CD14-positive monocyte (primary cell): ENCODE measurements at regions of chr3 and their contacts with region 1.

Region 1: DNA sequence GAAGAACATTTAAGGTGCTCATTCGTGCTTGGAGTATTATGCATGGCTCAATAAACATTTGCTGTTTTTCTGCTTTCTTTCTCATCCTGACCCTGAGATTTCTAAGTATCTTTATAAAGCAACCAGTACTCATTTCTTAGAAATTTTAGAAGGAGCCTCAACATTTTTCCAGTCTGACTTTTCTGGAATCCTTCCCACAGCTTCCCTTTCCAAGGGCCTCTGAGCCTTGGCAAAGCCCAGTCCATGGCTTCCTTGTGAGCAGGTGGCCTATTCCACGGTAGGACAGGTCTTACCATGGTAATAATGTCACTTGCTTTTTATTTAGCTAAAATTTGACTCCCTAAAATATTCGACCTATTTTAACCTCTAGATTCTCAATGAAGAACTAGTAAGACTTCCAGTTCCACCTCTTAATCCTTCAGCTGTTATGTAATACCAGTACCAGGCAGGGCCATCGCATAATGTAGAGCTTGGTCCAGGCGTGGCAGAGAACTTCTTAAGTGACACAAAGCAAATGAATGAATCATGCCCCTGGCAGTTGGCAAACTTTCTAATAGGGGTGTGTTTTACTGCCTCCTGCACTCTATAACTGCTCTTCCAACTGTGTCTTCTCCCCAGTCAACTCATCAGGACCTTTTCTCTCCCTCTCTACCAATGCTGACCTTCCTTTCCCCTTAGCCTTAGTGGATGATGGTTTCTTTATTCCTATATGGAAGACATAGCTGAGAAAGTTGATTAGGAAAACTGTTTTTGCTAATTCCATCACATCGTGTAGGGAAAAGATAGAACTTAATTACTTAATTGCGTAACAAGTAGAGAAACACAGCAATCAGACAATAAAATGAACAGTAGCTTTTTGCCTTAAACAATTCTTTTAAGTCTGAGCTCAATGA is 894 bp upstream of the TM4SF4 start:
- DNase-seq: peak; percentile 87 to 90 (median 88)
- H3K4me3 ChIP-seq: peak overlapping the region in 1 of 3 experiments; percentile 30
- H3K4me3 Mint-ChIP-seq: peak overlapping the region in 1 of 2 donors; percentile 39
- H3K27ac ChIP-seq: peak overlapping the region; percentile 62 to 80
- H3K27ac Mint-ChIP-seq: peak overlapping the region; percentile 84 to 95 (median 93)
- H3K4me1 ChIP-seq: peaks cover 62 to 67% of the 10 kb centered on the region in 2 donors
- H3K4me1 Mint-ChIP-seq: peaks cover 69% of the 10 kb centered on the region
- H3K27me3 ChIP-seq: no peaks in the 10 kb centered on the region
- H3K27me3 Mint-ChIP-seq: peaks cover 0 to 3% (median 0%) of the 10 kb centered on the region in 3 donors
- CTCF ChIP-seq: no peak

Region 2: GRCh38 chr3:149377408-149378377 is 95.9 kb before region 1 on chr3 and contains the start of gene TM4SF1:
- intact Hi-C with region 1: loop called in 1 of 2 experiments (anchors 10 kb)
- DNase-seq: peak in 2 of 3 donors; percentile 25 to 60
- H3K4me3 ChIP-seq: peak within 1 kb of the TSS in 1 of 3 experiments; percentile 18
- H3K4me3 Mint-ChIP-seq: peak within 1 kb of the TSS in 1 of 2 donors; percentile 54
- H3K27ac ChIP-seq: peak within 1 kb of the TSS in 1 of 2 donors; percentile 21
- H3K27ac Mint-ChIP-seq: peak within 1 kb of the TSS in 2 of 7 donors; percentile 37 to 80
- H3K4me1 ChIP-seq: peaks cover 44 to 55% of the 10 kb centered on the region in 2 donors
- H3K4me1 Mint-ChIP-seq: peaks cover 49% of the 10 kb centered on the region
- H3K27me3 ChIP-seq: no peaks in the 10 kb centered on the region
- H3K27me3 Mint-ChIP-seq: peaks cover 0 to 8% (median 2%) of the 10 kb centered on the region in 3 donors
- CTCF ChIP-seq: no peak
- polyA plus RNA-seq, gene TM4SF1: not detected

Region 3: GRCh38 chr3:149393345-149394160 is 80.0 kb before region 1 on chr3:
- intact Hi-C with region 1: loop called in 1 of 2 experiments (anchors 10 kb)
- DNase-seq: peak; percentile 65 to 78 (median 71)
- H3K4me3 ChIP-seq: peak overlapping the region in 1 of 3 experiments; percentile 33
- H3K4me3 Mint-ChIP-seq: peak overlapping the region in 1 of 2 donors; percentile 40
- H3K27ac ChIP-seq: peak overlapping the region in 1 of 2 donors; percentile 69
- H3K27ac Mint-ChIP-seq: peak overlapping the region; percentile 73 to 97 (median 92)
- H3K4me1 ChIP-seq: peaks cover 10 to 14% of the 10 kb centered on the region in 2 donors
- H3K4me1 Mint-ChIP-seq: peaks cover 11% of the 10 kb centered on the region
- H3K27me3 ChIP-seq: no peaks in the 10 kb centered on the region
- H3K27me3 Mint-ChIP-seq: peaks cover 0 to 2% (median 1%) of the 10 kb centered on the region in 3 donors
- CTCF ChIP-seq: peak; percentile 89

Region 4: DNA sequence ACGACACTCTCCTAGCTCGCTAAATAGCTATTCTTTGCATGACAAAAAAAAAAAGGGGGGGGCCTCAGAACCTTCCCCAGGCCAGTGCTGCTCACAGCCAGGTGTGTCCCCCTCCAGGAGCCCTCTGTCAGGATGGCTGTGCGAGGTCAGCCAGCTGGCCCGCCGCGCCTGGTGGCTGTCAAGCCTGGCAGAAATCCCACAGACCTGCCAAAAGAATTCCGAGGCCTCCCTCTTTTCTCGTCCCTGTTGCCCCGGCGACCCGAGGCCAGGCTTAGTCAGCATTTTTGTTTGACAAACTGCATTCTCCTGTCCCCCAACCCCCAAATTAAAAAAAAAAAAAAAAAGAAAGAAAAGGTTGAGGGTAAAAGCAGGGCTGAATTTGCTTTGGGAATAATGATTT is 62.8 kb after region 1 on chr3:
- intact Hi-C with region 1: no loop called
- DNase-seq: no peak
- H3K4me3 ChIP-seq: no peak overlapping the region
- H3K4me3 Mint-ChIP-seq: no peak overlapping the region
- H3K27ac ChIP-seq: no peak overlapping the region
- H3K27ac Mint-ChIP-seq: no peak overlapping the region
- H3K4me1 ChIP-seq: peaks cover 6 to 7% of the 10 kb centered on the region in 2 donors
- H3K4me1 Mint-ChIP-seq: peaks cover 13% of the 10 kb centered on the region
- H3K27me3 ChIP-seq: peaks cover 2 to 4% of the 10 kb centered on the region in 2 donors
- H3K27me3 Mint-ChIP-seq: peaks cover 7 to 22% (median 19%) of the 10 kb centered on the region in 3 donors
- CTCF ChIP-seq: no peak